ENCODE measurements at regions of chr15 and their contacts with region 1.

Region 1: DNA sequence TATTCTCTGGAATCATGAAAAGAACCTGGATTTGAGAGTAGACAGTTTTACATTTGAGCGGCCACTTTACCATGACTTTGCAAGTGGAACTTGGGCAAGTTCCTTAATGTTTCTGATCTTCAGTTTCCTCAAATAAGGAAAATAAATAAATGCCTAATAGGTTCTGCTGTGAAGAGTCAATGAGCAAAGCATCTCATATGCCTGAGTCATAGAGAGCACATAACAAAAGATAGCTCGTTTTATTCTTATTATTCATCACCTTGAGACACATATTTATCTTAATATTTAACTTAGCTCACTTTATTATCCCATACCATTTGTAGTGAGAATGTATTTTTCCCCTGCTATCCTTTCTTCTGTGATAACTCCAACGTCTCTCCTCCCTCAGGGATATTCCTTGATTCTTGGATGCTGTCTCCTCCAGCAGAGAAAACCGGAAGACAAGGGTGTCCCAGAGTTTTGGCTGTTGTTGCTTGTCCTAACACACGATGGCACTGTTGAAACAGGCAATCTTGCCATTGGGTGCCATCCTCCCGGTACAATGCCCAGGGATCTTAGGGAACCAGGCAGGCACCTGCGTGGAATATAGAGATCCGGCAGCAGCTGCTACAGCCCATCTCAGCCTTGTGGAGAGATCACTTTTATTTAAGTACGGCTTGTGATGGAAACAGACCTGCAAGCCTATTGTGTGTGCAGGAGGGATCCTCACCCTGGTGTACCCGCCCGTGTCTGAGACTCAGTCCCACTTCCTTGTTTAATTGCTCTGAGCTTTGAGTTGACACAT is 33.3 kb upstream of the VPS33B start:
- DNase-seq: no peak
- H3K4me3 ChIP-seq: no peak overlapping the region
- H3K27ac ChIP-seq: no peak overlapping the region
- H3K4me1 ChIP-seq: peaks cover 0 to 5% (median 0%) of the 10 kb centered on the region in 3 donors
- H3K27me3 ChIP-seq: peaks cover 0 to 83% (median 0%) of the 10 kb centered on the region in 4 donors
- CTCF ChIP-seq: peak; percentile 20 to 82 (median 71)
- POLR2A ChIP-seq: no peak

Region 2: GRCh38 chr15:91214675-91215590 is 159.2 kb after region 1 on chr15:
- intact Hi-C with region 1: loop called (anchors 5 kb)
- DNase-seq: no peak
- H3K4me3 ChIP-seq: no peak overlapping the region
- H3K27ac ChIP-seq: no peak overlapping the region
- H3K4me1 ChIP-seq: no peaks in the 10 kb centered on the region
- H3K27me3 ChIP-seq: peaks cover 0 to 10% (median 0%) of the 10 kb centered on the region in 4 donors
- CTCF ChIP-seq: no peak
- POLR2A ChIP-seq: no peak

Region 3: DNA sequence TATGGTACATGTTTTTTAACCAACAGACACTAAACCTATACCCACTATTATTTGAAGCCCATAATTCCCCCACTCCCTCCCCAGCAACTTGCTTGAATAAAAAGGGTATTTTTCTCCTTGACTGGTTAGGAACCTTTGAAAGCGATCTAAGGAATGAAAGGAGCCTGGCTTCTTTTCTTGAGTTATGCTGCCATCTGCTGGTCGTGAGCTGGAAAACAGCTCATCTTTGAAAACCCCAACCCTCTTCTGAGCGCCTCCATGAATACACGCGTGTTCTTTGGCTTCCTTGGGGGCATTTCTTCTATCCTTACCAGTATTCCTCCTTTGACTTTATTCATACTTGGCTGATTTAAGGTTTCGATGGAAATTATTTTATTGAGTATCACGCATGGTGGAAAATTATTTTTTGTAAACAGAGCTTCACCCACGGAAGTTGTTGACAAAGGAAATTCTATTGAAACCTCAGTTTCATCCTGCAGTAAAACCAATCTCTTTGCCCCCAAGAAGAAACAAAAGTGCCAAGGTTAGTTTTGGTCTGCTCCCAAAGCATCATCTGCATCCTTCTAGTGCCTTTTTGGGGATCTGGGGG is 215.9 kb after region 1 on chr15:
- intact Hi-C with region 1: loop called (anchors 5 kb)
- DNase-seq: no peak
- H3K4me3 ChIP-seq: no peak overlapping the region
- H3K27ac ChIP-seq: no peak overlapping the region
- H3K4me1 ChIP-seq: peaks cover 0 to 6% (median 0%) of the 10 kb centered on the region in 3 donors
- H3K27me3 ChIP-seq: peaks cover 0 to 39% (median 2%) of the 10 kb centered on the region in 4 donors
- CTCF ChIP-seq: peak; percentile 58 to 81 (median 73)
- POLR2A ChIP-seq: no peak

Region 4: DNA sequence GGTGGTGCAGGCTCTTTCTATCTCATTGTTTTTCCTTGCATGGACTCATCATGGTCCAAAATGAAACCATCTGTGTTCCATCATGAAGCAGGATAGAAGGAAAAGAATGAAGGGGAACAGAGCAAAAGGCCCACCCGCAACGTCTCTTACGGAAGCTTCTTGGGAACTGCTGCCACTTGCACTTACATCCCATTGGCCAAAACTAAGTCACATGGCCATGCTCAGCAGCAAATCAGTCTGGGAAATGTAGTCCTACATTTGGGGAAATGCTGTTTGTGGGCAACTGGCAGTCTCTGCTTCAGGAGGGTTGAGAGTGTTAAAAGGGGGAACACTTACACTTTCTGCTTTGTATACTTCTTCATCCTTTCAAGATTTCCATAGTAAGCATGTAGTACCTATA is 235.9 kb after region 1 on chr15:
- intact Hi-C with region 1: no loop called
- DNase-seq: no peak
- H3K4me3 ChIP-seq: no peak overlapping the region
- H3K27ac ChIP-seq: no peak overlapping the region
- H3K4me1 ChIP-seq: no peaks in the 10 kb centered on the region
- H3K27me3 ChIP-seq: peaks cover 0 to 50% (median 0%) of the 10 kb centered on the region in 4 donors
- CTCF ChIP-seq: no peak
- POLR2A ChIP-seq: no peak